ENCODE measurements at regions of chr4 and their contacts with region 1.

Region 1: DNA sequence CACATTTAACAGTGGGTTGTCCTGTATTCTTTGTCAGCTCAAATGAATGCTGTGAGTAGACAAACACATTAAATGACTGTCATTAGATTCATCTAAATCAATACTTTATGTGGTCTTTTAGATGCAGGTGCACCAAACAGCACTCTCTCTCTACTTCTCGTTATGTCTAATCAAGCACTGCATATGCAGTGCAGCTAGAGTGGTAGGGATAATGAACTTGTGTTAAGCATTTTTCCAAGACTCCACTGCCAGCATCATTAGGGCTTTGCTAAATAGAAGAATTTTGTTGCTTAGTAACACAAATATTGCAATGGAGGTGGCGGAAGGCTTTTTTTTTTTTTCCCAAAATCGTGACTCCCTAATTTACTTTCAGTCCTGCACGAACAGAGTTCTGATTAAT is 447.0 kb upstream of the GALNT7 start:
- DNase-seq: no peak
- H3K4me3 ChIP-seq: no peak overlapping the region
- H3K27ac ChIP-seq: no peak overlapping the region
- H3K4me1 ChIP-seq: no peaks in the 10 kb centered on the region
- H3K27me3 ChIP-seq: no peaks in the 10 kb centered on the region
- CTCF ChIP-seq: no peak
- POLR2A ChIP-seq: no peak

Region 2: GRCh38 chr4:172736046-172736445 is 14.4 kb after region 1 on chr4:
- intact Hi-C with region 1: no loop called
- DNase-seq: no peak
- H3K4me3 ChIP-seq: no peak overlapping the region
- H3K27ac ChIP-seq: no peak overlapping the region
- H3K4me1 ChIP-seq: no peaks in the 10 kb centered on the region
- H3K27me3 ChIP-seq: no peaks in the 10 kb centered on the region
- CTCF ChIP-seq: no peak
- POLR2A ChIP-seq: no peak

Region 3: DNA sequence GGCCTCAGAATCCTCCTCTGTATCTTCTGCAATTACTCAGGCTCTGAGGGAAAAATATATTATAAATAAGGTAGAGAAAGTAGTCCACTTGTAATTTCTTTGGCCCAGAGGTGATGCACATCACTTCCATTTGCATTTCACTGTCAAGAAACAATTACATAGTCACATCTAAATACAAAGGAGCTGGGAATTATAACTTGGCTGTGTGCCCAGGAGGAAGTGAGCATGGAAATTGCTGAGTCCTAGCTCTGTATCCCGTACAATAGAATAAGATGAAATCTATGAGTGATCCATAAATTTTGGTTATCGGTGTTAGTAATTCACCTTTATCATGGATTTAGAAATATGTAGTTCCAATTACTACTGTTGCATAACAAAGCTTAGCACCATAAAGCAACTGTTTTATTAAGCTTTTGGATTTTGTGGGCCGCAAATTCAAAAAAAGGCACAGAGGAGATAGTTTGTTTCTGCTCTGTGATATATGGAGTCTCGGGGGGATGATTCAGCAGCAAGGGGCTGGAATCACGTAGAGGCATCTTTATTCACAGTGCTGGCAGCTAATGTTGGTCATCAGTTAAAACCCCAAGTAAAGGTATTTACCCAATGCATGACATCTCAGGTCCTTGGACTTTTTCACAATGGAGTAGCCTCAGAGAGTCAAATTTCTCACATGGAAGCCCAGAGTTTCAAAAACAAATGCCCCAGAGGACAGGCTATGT is 205.6 kb after region 1 on chr4:
- intact Hi-C with region 1: loop called (anchors 5 kb)
- DNase-seq: no peak
- H3K4me3 ChIP-seq: no peak overlapping the region
- H3K27ac ChIP-seq: no peak overlapping the region
- H3K4me1 ChIP-seq: no peaks in the 10 kb centered on the region
- H3K27me3 ChIP-seq: no peaks in the 10 kb centered on the region
- CTCF ChIP-seq: no peak
- POLR2A ChIP-seq: no peak

Region 4: DNA sequence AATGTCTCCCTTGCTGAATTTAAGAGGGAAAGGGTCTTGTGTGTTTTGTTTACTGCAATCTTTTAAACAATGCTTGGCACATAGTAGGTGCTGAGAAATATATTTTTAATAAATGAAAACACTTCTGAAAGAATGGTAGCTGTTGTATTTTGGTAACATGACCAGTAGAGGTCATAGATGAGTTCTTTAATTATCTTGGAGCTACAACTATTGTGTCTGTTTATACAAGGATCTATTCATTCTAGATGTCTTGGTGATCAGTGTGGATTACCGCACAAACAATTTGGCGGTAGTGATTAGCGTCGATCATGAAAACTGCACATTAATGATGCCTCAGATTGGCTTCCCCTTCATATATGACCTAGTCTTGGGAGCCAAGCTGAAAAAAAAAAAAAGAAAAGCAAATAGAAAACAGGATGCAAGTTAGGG is 698.7 kb after region 1 on chr4:
- intact Hi-C with region 1: no loop called
- DNase-seq: no peak
- H3K4me3 ChIP-seq: no peak overlapping the region
- H3K27ac ChIP-seq: no peak overlapping the region
- H3K4me1 ChIP-seq: no peaks in the 10 kb centered on the region
- H3K27me3 ChIP-seq: no peaks in the 10 kb centered on the region
- CTCF ChIP-seq: peak in 2 of 3 donors; percentile 33 to 49
- POLR2A ChIP-seq: no peak

Measured in breast epithelium (tissue), 4 donors.